Activated naive CD4-positive, alpha-beta T cell treated with anti-CD3 and anti-CD28 coated beads for 36 hours (primary cell): ENCODE measurements at regions of chr10 and their contacts with region 1.

Region 1: DNA sequence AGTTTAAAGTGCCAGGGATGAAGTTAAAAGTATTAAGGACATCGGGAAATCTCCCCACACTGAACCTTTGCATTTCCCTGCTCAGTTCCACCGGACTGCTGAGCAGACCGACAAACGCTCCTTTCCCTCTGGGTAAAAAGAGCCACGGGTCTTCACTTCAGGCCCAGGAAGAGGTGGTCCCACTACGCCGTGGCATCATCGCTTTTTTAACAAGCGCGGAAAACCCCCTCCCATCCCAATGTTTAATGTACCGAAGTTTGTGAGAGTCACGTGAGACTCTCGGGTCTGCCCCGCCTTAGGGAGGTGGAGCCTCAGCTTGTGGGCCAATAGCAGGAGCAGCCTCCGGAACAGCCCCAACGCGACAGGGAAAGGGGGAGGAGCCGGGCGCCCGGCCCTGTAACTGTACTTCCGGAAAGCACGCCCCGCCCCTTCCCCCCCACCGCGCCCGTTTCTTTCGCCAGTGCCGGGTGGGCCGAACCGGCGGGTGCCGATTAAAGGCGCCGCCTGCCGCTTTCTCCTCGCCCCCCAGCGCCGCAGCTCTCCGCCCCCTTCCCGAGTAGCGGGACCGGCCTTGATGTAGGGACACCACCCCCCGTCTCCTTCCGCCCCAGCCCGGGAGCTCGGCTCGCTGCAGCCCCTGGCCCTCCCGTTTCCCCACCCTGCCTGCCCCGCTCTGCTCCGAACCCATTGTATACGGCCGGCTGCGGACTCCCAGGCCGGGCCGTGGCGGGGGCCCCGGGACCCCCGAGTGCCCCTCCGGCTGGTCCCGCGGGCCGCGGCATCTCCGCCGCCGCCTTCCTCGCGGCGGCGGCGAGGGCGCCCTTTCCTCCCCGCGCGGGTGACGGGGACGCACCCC is 2.2 kb upstream of the TRIM8 start:
- DNase-seq: peak; percentile 99
- H3K4me3 Mint-ChIP-seq: peak overlapping the region; percentile 83
- H3K27ac Mint-ChIP-seq: peak overlapping the region; percentile 88
- H3K4me1 Mint-ChIP-seq: peaks cover 18% of the 10 kb centered on the region
- H3K27me3 Mint-ChIP-seq: no peaks in the 10 kb centered on the region

Region 2: GRCh38 chr10:101818119-101818871 is 823.8 kb before region 1 on chr10 and contains the start of gene OGA:
- CTCF ChIA-PET with region 1: no interaction called
- intact Hi-C with region 1: loop called (anchors 1 kb)
- DNase-seq: peak; percentile 99
- H3K4me3 Mint-ChIP-seq: peak within 1 kb of the TSS; percentile 92
- H3K27ac Mint-ChIP-seq: peak within 1 kb of the TSS; percentile 93
- H3K4me1 Mint-ChIP-seq: peaks cover 40% of the 10 kb centered on the region
- H3K27me3 Mint-ChIP-seq: no peaks in the 10 kb centered on the region
- total RNA-seq, gene OGA: 90.8 to 96.3 TPM

Region 3: DNA sequence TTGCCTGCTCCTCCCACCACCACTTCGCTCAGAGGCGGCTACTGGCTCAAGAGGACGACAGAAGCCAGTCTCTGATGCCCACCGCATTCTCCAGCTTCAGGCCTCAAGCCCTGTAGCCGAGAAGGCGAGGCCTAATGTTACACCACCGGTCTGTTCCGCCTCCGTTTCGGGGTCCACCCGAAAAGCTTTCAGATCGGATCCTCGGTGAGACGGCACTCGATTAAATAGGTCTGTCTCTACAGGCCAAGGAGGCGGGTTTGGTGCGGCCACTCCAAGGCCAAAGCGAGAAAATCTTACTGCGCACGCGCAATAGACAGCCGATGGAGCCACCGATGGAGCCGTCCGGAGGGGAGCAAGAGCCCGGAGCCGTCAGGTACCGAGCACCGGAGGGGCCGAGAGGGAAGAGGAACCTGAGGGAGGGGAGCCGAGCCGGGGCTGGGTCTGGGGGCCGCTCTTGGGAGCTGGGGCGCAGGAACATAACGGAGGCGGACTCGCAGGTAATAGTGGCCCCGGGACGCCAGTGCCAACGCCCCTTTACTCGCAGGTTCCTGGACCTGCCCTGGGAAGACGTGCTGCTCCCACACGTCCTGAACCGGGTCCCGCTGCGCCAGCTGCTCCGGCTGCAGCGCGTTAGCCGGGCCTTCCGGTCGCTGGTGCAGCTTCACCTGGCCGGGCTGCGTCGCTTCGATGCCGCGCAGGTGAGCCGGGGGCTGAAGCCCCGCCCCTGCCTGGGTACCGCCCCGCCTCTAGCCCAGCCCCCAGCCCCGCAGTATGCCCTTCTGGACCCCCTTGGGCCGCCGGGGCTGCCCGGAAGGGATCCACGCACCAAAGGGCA is 221.1 kb before region 1 on chr10 and contains the start of gene FBXL15:
- CTCF ChIA-PET with region 1: no interaction called
- intact Hi-C with region 1: loop called (anchors 1 kb)
- DNase-seq: peak; percentile 98
- H3K4me3 Mint-ChIP-seq: peak within 1 kb of the TSS; percentile 95
- H3K27ac Mint-ChIP-seq: peak within 1 kb of the TSS; percentile 91
- H3K4me1 Mint-ChIP-seq: peaks cover 30% of the 10 kb centered on the region
- H3K27me3 Mint-ChIP-seq: peaks cover 20% of the 10 kb centered on the region
- total RNA-seq, gene FBXL15: 9.9 to 10.8 TPM

Region 4: DNA sequence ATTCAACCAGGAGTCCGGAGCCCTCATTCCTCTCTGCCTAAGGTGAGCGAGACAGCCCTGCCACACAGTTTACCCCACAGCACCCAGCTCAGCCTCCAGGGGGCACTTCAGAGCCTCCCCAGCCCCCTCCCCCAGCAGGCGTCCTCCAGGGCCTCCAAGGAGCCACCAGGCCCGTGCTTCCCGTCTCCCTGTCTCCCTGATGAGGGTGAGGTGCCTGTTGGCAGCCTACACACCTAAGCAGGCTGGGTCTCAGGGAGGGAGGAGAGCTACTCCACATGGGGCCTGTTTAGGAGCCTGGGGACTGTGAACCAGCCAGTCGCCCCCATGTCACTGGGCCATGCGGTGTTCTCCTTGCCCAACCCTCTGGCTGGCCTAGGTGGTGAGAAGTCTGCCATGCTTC is 26.7 kb before region 1 on chr10:
- CTCF ChIA-PET with region 1: interaction called, 5 read pairs
- intact Hi-C with region 1: loop called (anchors 1 kb)
- DNase-seq: peak; percentile 45
- H3K4me3 Mint-ChIP-seq: no peak overlapping the region
- H3K27ac Mint-ChIP-seq: no peak overlapping the region
- H3K4me1 Mint-ChIP-seq: peaks cover 29% of the 10 kb centered on the region
- H3K27me3 Mint-ChIP-seq: no peaks in the 10 kb centered on the region

Region 5: GRCh38 chr10:102713814-102714620 is 71.9 kb after region 1 on chr10 and contains the start of gene ARL3:
- CTCF ChIA-PET with region 1: interaction called, 15 read pairs
- intact Hi-C with region 1: loop called (anchors 1 kb)
- DNase-seq: peak; percentile 98
- H3K4me3 Mint-ChIP-seq: peak within 1 kb of the TSS; percentile 92
- H3K27ac Mint-ChIP-seq: peak within 1 kb of the TSS; percentile 79
- H3K4me1 Mint-ChIP-seq: peaks cover 44% of the 10 kb centered on the region
- H3K27me3 Mint-ChIP-seq: no peaks in the 10 kb centered on the region
- total RNA-seq, gene ARL3: 3.9 TPM

Region 6: DNA sequence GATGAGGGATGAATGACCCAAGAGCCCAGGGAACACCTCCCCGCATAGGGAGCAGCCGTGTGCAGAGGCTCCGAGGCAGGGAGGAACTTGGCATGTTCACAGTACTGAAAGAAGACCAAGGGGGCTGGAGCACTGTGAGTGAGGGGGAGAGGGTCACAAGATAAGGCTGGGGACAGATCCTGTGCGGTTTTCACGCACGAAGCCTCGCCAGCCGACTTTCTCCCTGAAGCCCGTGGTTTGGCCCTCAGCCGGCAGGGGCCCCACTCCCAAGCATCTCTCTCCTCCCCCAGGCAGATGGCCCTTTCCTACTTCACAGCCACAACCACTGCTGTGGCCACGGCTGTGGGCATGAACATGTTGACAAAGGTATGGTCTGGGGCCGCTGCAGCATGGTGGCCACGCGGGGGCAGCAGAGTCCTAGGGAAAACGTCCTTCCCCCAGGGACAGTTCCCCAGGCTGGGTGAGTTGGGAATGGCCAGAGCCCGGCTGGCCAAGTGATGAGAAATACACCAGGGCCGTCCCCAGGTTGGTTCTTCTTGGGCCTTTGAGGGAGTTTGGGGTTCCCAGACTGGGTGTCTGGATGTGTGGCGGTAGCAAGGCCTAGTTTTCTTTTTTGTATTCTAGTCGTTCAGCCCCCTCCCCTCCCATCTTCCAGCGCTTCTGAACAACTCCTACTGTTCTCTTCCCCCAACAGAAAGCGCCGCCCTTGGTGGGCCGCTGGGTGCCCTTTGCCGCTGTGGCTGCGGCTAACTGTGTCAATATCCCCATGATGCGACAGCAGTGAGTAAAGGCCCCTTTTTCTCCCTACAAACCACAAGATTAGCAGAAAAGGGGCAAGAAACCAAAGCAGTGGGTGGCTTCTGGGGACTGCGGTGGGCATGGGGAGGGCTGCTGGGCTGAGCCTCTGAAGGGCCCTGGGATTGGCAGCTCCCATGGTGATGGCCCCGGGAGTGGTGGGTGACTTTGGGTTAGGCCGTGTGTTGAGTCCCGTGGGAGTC is 87.2 kb after region 1 on chr10:
- CTCF ChIA-PET with region 1: no interaction called
- intact Hi-C with region 1: no loop called
- DNase-seq: peak; percentile 71
- H3K4me3 Mint-ChIP-seq: no peak overlapping the region
- H3K27ac Mint-ChIP-seq: no peak overlapping the region
- H3K4me1 Mint-ChIP-seq: no peaks in the 10 kb centered on the region
- H3K27me3 Mint-ChIP-seq: no peaks in the 10 kb centered on the region

Region 7: DNA sequence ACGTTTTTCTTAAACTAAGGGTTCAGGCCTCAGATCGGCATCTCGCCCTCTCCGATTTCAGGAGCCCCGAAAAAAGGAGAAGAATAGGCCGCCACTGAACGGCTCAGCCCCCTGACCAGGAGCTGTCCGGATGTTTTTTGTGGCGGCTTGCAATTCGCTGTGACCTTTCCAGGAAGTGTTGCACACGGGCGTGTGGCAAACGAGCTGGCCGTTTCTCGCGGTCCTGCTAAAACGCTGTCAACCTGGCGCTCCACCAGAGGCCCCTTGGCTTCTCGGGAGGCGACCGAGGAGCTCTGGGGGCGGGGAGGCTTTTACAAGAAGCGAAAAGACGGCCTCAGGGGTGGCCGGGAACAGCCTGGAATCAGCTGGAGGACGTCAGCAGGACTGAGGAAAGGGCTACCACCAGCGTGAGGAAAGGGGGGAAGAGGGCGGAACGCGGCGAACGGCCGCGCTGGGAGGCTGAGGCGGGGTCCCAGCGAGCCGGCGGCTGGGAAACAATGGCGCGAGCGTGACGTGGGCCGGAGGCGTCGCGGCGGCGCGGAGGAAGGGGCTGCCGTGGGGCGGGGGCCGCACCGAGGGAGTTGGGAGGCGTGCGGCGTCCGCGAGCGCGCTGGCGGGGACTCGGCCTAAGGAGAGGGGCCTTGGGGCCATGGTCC is 550.5 kb after region 1 on chr10:
- CTCF ChIA-PET with region 1: no interaction called
- intact Hi-C with region 1: loop called (anchors 10 kb)
- DNase-seq: peak; percentile 78
- H3K4me3 Mint-ChIP-seq: peak overlapping the region; percentile 87
- H3K27ac Mint-ChIP-seq: peak overlapping the region; percentile 96
- H3K4me1 Mint-ChIP-seq: peaks cover 39% of the 10 kb centered on the region
- H3K27me3 Mint-ChIP-seq: no peaks in the 10 kb centered on the region